PC-9 (cell line): ENCODE measurements at regions of chr17 and their contacts with region 1.

Region 1: GRCh38 chr17:2083613-2084128 is 28.8 kb downstream of the HIC1 start:
- DNase-seq: peak; percentile 49 to 97
- H3K4me3 ChIP-seq: no peak overlapping the region
- H3K27ac ChIP-seq: peak overlapping the region; percentile 99
- H3K4me1 ChIP-seq: peaks cover 42% of the 10 kb centered on the region
- H3K27me3 ChIP-seq: no peaks in the 10 kb centered on the region
- CTCF ChIP-seq: no peak

Region 2: DNA sequence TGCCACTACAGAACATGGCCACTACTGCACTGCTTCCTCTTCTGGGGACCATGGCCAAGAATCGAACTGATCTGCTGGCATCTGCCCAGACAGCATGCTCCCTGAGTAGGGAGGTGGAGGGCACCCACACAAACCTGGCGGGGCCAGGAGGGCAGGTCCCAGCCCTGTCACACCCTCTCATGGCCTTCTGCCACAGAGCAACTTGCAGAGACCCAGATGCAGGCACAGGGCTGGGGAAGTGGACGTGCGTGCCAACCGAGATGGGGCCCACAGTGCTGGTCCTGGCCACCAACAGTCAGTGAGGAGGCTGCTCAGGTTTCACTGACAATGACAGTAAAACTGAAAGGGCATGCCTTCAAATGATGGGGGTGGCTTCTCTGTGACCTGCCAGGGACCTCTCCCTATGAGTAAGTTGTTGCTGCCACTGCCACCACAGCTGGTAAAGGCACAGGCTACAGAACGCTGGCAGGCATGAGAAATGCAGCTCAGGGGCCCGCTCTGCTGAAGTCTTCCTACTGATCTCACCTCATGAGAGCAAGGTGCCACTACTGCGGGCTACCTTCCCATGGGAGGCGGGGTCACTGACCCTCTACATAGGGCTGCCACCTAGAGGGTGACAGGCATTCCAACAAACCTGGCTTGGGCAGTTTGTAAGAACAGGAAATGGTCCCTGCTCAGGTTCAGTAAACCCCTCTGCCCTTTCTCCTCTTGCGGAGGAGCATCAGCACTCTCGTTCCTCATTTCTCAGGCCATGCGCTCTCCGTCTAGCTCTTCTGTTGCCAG is 13.2 kb before region 1 on chr17:
- CTCF ChIA-PET with region 1: interaction called, 3 read pairs
- POLR2A ChIA-PET with region 1: interaction called, 5 read pairs
- intact Hi-C with region 1: loop called (anchors 2 kb)
- DNase-seq: peak in 1 of 2 experiments; percentile 71
- H3K4me3 ChIP-seq: no peak overlapping the region
- H3K27ac ChIP-seq: no peak overlapping the region
- H3K4me1 ChIP-seq: peaks cover 2% of the 10 kb centered on the region; the same call in 1 of the 2 replicates
- H3K27me3 ChIP-seq: no peaks in the 10 kb centered on the region
- CTCF ChIP-seq: no peak

Region 3: GRCh38 chr17:2101448-2102257 is 18.0 kb after region 1 on chr17:
- CTCF ChIA-PET with region 1: interaction called, 7 read pairs
- POLR2A ChIA-PET with region 1: interaction called, 11 read pairs
- intact Hi-C with region 1: loop called (anchors 1 kb)
- DNase-seq: peak; percentile 96 to 99
- H3K4me3 ChIP-seq: no peak overlapping the region
- H3K27ac ChIP-seq: peak overlapping the region; percentile 77
- H3K4me1 ChIP-seq: peaks cover 17% of the 10 kb centered on the region
- H3K27me3 ChIP-seq: no peaks in the 10 kb centered on the region
- CTCF ChIP-seq: no peak

Region 4: GRCh38 chr17:2122641-2123302 is 39.1 kb after region 1 on chr17:
- CTCF ChIA-PET with region 1: interaction called, 3 read pairs
- POLR2A ChIA-PET with region 1: interaction called, 4 read pairs
- intact Hi-C with region 1: loop called (anchors 5 kb)
- DNase-seq: peak in 1 of 2 experiments; percentile 87
- H3K4me3 ChIP-seq: no peak overlapping the region
- H3K27ac ChIP-seq: no peak overlapping the region
- H3K4me1 ChIP-seq: no peaks in the 10 kb centered on the region
- H3K27me3 ChIP-seq: no peaks in the 10 kb centered on the region
- CTCF ChIP-seq: no peak

Region 5: GRCh38 chr17:2137342-2138098 is 53.8 kb after region 1 on chr17:
- CTCF ChIA-PET with region 1: no interaction called
- POLR2A ChIA-PET with region 1: no interaction called
- intact Hi-C with region 1: loop called (anchors 5 kb)
- DNase-seq: peak in 1 of 2 experiments; percentile 43
- H3K4me3 ChIP-seq: no peak overlapping the region
- H3K27ac ChIP-seq: no peak overlapping the region
- H3K4me1 ChIP-seq: peaks cover 16% of the 10 kb centered on the region
- H3K27me3 ChIP-seq: no peaks in the 10 kb centered on the region
- CTCF ChIP-seq: no peak

Region 6: GRCh38 chr17:2149934-2150333 is 66.3 kb after region 1 on chr17:
- CTCF ChIA-PET with region 1: no interaction called
- POLR2A ChIA-PET with region 1: interaction called, 30 read pairs
- intact Hi-C with region 1: no loop called
- DNase-seq: no peak
- H3K4me3 ChIP-seq: no peak overlapping the region
- H3K27ac ChIP-seq: no peak overlapping the region
- H3K4me1 ChIP-seq: peaks cover 7% of the 10 kb centered on the region
- H3K27me3 ChIP-seq: no peaks in the 10 kb centered on the region
- CTCF ChIP-seq: no peak

Region 7: GRCh38 chr17:2253768-2254406 is 170.2 kb after region 1 on chr17:
- CTCF ChIA-PET with region 1: interaction called, 11 read pairs
- POLR2A ChIA-PET with region 1: no interaction called
- intact Hi-C with region 1: no loop called
- DNase-seq: no peak
- H3K4me3 ChIP-seq: no peak overlapping the region
- H3K27ac ChIP-seq: no peak overlapping the region
- H3K4me1 ChIP-seq: no peaks in the 10 kb centered on the region
- H3K27me3 ChIP-seq: no peaks in the 10 kb centered on the region
- CTCF ChIP-seq: no peak